CD8-positive, alpha-beta memory T cell (primary cell): ENCODE measurements at regions of chr5 and their contacts with region 1.

Region 1: GRCh38 chr5:140647042-140647341 is 438 bp downstream of the NDUFA2 start:
- DNase-seq: no peak
- H3K4me3 ChIP-seq: peak overlapping the region; percentile 92
- H3K4me3 Mint-ChIP-seq: peak overlapping the region; percentile 93 to 100 (median 99)
- H3K27ac ChIP-seq: peak overlapping the region; percentile 97
- H3K27ac Mint-ChIP-seq: peak overlapping the region; percentile 94 to 100 (median 100)
- H3K4me1 ChIP-seq: peaks cover 29% of the 10 kb centered on the region
- H3K4me1 Mint-ChIP-seq: peaks cover 37 to 70% (median 62%) of the 10 kb centered on the region in 3 donors
- H3K27me3 ChIP-seq: no peaks in the 10 kb centered on the region
- H3K27me3 Mint-ChIP-seq: peaks cover 0 to 2% of the 10 kb centered on the region in 2 donors

Region 2: GRCh38 chr5:140401362-140402257 is 245.4 kb before region 1 on chr5 and contains the start of gene ANKHD1:
- CTCF ChIA-PET with region 1: interaction called, 6 read pairs
- POLR2A ChIA-PET with region 1: interaction called, 14 read pairs
- DNase-seq: peak; percentile 93 to 99 (median 98)
- H3K4me3 ChIP-seq: peak within 1 kb of the TSS; percentile 90
- H3K4me3 Mint-ChIP-seq: no peak within 1 kb of the TSS
- H3K27ac ChIP-seq: peak within 1 kb of the TSS; percentile 93
- H3K27ac Mint-ChIP-seq: peak within 1 kb of the TSS in 1 of 8 donors; percentile 90
- H3K4me1 ChIP-seq: peaks cover 44% of the 10 kb centered on the region
- H3K4me1 Mint-ChIP-seq: peaks cover 37 to 43% (median 41%) of the 10 kb centered on the region in 3 donors
- H3K27me3 ChIP-seq: no peaks in the 10 kb centered on the region
- H3K27me3 Mint-ChIP-seq: peaks cover 0 to 2% of the 10 kb centered on the region in 2 donors
- total RNA-seq, gene ANKHD1: 100 to 107 TPM

Region 3: DNA sequence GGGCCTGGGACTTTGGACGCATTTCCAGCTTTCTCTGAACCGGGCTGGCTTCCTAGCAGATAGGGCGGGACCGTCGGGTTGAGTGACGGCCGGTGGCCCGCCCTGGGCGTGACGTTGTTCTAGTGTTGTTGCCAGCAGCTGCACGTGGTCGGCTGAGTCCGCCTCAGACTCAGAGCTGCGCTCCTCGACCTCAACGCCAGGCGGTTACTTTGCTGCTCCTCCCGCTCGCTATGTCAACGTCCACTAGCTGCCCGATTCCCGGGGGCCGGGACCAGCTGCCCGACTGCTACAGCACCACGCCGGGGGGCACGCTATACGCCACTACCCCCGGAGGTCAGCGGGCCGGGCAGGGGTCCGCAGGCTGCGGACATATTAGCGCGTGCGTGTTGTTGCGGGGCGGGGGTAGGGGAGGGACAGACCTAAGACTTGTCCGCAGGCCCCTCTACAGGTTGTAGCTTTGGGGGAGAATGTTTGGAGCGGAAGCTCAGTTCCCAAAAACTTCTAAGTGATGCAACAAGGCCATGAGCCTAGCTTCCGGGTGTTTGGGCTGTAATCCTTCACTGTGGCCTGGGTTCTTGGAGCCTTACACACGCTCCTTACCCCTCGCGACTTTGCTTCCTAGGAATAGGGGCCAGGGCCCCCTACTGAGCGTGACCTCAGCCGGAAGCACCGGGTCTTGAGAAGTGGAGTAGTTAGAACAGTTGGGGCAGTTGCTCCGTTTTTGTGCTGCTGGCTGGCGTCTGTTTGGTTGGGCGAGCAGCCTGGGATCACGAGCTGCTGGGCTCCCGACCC is 99.3 kb before region 1 on chr5 and contains the start of gene EIF4EBP3:
- CTCF ChIA-PET with region 1: interaction called, 9 read pairs
- POLR2A ChIA-PET with region 1: interaction called, 11 read pairs
- DNase-seq: peak; percentile 78 to 91 (median 82)
- H3K4me3 ChIP-seq: peak within 1 kb of the TSS; percentile 70
- H3K4me3 Mint-ChIP-seq: peak within 1 kb of the TSS; percentile 80 to 88 (median 84)
- H3K27ac ChIP-seq: peak within 1 kb of the TSS; percentile 66
- H3K27ac Mint-ChIP-seq: peak within 1 kb of the TSS; percentile 87 to 95 (median 94)
- H3K4me1 ChIP-seq: peaks cover 32% of the 10 kb centered on the region
- H3K4me1 Mint-ChIP-seq: peaks cover 21 to 39% (median 33%) of the 10 kb centered on the region in 3 donors
- H3K27me3 ChIP-seq: no peaks in the 10 kb centered on the region
- H3K27me3 Mint-ChIP-seq: no peaks in the 10 kb centered on the region
- total RNA-seq, gene EIF4EBP3: 11.1 to 11.9 TPM

Region 4: DNA sequence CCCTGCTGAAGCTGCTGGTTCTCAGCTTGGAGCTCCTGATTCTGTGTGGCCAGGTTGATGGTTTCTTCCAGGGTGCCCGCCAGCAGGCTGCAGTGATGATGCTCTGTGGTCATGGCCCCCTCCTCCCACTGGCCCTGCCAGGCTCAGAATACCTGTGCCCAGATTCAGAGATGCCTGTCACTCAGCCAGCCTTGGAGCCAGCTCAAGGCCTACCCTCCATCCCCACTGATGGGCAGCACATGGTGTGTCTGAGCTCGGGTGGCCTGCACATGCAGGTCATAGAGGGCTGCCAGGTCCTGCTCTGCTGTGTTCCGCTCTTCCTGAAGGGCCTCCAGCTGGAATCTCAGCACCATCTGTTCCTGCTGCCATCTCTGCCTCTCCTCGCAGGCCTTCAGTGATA is 76.9 kb before region 1 on chr5:
- CTCF ChIA-PET with region 1: no interaction called
- POLR2A ChIA-PET with region 1: interaction called, 10 read pairs
- DNase-seq: no peak
- H3K4me3 ChIP-seq: no peak overlapping the region
- H3K4me3 Mint-ChIP-seq: peak overlapping the region in 3 of 7 donors; percentile 10 to 81 (median 23)
- H3K27ac ChIP-seq: peak overlapping the region; percentile 27
- H3K27ac Mint-ChIP-seq: peak overlapping the region; percentile 95 to 98 (median 96)
- H3K4me1 ChIP-seq: peaks cover 31% of the 10 kb centered on the region
- H3K4me1 Mint-ChIP-seq: peaks cover 23 to 52% (median 32%) of the 10 kb centered on the region in 3 donors
- H3K27me3 ChIP-seq: no peaks in the 10 kb centered on the region
- H3K27me3 Mint-ChIP-seq: no peaks in the 10 kb centered on the region

Region 5: GRCh38 chr5:140632150-140633020 is 14.6 kb before region 1 on chr5:
- CTCF ChIA-PET with region 1: interaction called, 21 read pairs
- POLR2A ChIA-PET with region 1: interaction called, 12 read pairs
- DNase-seq: peak; percentile 24 to 63 (median 43)
- H3K4me3 ChIP-seq: peak overlapping the region; percentile 74
- H3K4me3 Mint-ChIP-seq: peak overlapping the region; percentile 85 to 97 (median 91)
- H3K27ac ChIP-seq: no peak overlapping the region
- H3K27ac Mint-ChIP-seq: peak overlapping the region; percentile 33 to 91 (median 88)
- H3K4me1 ChIP-seq: peaks cover 6% of the 10 kb centered on the region
- H3K4me1 Mint-ChIP-seq: peaks cover 15 to 25% (median 25%) of the 10 kb centered on the region in 3 donors
- H3K27me3 ChIP-seq: no peaks in the 10 kb centered on the region
- H3K27me3 Mint-ChIP-seq: peaks cover 7 to 12% of the 10 kb centered on the region in 2 donors

Region 6: DNA sequence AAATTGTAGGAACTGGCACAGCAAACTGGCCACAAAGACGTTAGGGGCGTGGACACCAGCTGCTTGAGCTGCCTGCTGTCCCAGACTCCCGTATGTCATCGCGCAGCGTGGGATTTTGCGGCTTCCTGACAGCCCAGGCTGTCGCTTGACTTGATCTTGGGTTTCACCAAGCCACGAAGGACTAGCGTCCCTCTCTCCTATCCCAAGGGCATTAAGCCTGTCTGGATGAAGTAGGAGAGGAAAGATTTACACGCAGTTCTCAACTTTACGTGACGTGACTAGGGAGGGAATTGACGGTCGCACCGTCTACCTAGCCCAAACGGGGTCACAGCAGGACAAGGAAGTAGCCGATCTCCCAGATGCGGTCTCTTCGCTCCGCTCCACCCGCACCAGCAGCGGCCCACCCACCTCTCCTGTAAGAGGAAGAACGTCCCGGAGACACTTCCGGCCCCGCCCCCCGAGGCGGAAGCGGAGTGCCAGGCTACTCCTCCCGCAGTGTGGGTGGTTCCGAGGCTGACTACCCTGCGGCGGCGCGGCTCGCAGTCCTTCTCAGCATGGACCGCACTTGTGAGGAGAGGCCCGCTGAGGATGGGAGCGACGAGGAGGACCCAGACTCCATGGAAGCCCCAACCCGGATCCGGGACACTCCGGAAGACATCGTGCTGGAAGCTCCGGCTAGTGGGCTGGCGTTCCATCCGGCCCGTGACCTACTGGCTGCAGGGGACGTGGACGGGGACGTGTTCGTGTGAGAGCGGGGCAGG is 17.5 kb after region 1 on chr5 and contains the start of gene WDR55:
- CTCF ChIA-PET with region 1: no interaction called
- POLR2A ChIA-PET with region 1: interaction called, 16 read pairs
- DNase-seq: peak; percentile 94 to 97 (median 95)
- H3K4me3 ChIP-seq: peak within 1 kb of the TSS; percentile 84
- H3K4me3 Mint-ChIP-seq: peak within 1 kb of the TSS; percentile 93 to 100 (median 98)
- H3K27ac ChIP-seq: peak within 1 kb of the TSS; percentile 91
- H3K27ac Mint-ChIP-seq: peak within 1 kb of the TSS; percentile 97 to 100 (median 99)
- H3K4me1 ChIP-seq: peaks cover 24% of the 10 kb centered on the region
- H3K4me1 Mint-ChIP-seq: peaks cover 33 to 41% (median 39%) of the 10 kb centered on the region in 3 donors
- H3K27me3 ChIP-seq: no peaks in the 10 kb centered on the region
- H3K27me3 Mint-ChIP-seq: peaks cover 0 to 1% of the 10 kb centered on the region in 2 donors
- total RNA-seq, gene WDR55: 40.1 to 40.7 TPM